PC-9 (cell line): ENCODE measurements at regions of chr3 and their contacts with region 1.

Region 1: GRCh38 chr3:41710646-41711388 is 251.1 kb downstream of the ULK4 start:
- DNase-seq: peak; percentile 50 to 68
- H3K4me3 ChIP-seq: no peak overlapping the region
- H3K27ac ChIP-seq: peak overlapping the region; percentile 49
- H3K4me1 ChIP-seq: peaks cover 16% of the 10 kb centered on the region
- H3K27me3 ChIP-seq: no peaks in the 10 kb centered on the region
- CTCF ChIP-seq: no peak

Region 2: GRCh38 chr3:41581700-41582099 is 129.1 kb before region 1 on chr3:
- CTCF ChIA-PET with region 1: no interaction called
- POLR2A ChIA-PET with region 1: no interaction called
- intact Hi-C with region 1: loop called (anchors 5 kb)
- DNase-seq: no peak
- H3K4me3 ChIP-seq: no peak overlapping the region
- H3K27ac ChIP-seq: no peak overlapping the region
- H3K4me1 ChIP-seq: no peaks in the 10 kb centered on the region
- H3K27me3 ChIP-seq: no peaks in the 10 kb centered on the region
- CTCF ChIP-seq: no peak